ENCODE measurements at regions of chr11 and their contacts with region 1.

Region 1: GRCh38 chr11:67239783-67240575 is 26.3 kb upstream of the GRK2 start:
- DNase-seq: peak; percentile 97
- H3K4me3 Mint-ChIP-seq: peak overlapping the region; percentile 99
- H3K27ac Mint-ChIP-seq: peak overlapping the region; percentile 99
- H3K4me1 Mint-ChIP-seq: peaks cover 30% of the 10 kb centered on the region
- H3K27me3 Mint-ChIP-seq: no peaks in the 10 kb centered on the region

Region 2: GRCh38 chr11:67277231-67277961 is 37.4 kb after region 1 on chr11:
- intact Hi-C with region 1: loop called (anchors 2 kb)
- DNase-seq: peak; percentile 90
- H3K4me3 Mint-ChIP-seq: peak overlapping the region; percentile 71
- H3K27ac Mint-ChIP-seq: peak overlapping the region; percentile 98
- H3K4me1 Mint-ChIP-seq: peaks cover 43% of the 10 kb centered on the region
- H3K27me3 Mint-ChIP-seq: no peaks in the 10 kb centered on the region